PC-3 (cell line): ENCODE measurements at regions of chr1 and their contacts with region 1.

Region 1: DNA sequence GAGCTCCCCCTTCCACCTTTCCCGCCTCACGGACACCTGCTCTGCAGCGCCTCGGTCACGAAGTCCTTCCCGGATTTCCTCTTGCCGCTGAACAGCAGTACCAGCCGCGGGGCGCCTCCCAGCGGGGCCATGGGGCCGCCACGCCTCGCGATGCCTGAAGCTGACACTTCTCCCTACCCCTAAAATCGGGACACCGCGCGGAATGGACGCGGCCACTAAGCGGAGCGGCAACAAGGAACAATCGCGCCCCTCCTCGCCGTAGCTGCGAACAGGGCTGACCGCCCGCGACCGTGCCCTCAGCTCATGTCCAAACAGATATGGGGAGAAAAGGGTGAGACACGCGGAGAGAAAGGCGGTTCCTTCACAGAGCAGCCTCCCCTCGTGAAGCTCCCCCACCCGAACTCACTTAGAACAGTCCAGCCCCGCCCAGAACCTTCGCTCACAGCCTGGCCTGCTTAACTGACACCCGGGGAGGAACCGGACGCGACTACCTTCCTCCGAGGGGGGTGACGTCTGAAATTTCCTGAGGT is at the start of gene PMVK:
- DNase-seq: peak; percentile 94
- ATAC-seq: peak; percentile 72
- H3K4me3 ChIP-seq: peak within 1 kb of the TSS; percentile 67
- H3K27ac ChIP-seq: peak within 1 kb of the TSS; percentile 93
- H3K4me1 ChIP-seq: peaks cover 45% of the 10 kb centered on the region
- H3K27me3 ChIP-seq: no peaks in the 10 kb centered on the region
- CTCF ChIP-seq: peak; percentile 53
- total RNA-seq, gene PMVK: 32.3 and 41.5 TPM in 2 replicates

Region 2: GRCh38 chr1:154607609-154608396 is 328.8 kb before region 1 on chr1 and contains the start of gene ADAR:
- CTCF ChIA-PET with region 1: no interaction called
- POLR2A ChIA-PET with region 1: no interaction called
- intact Hi-C with region 1: loop called (anchors 5 kb)
- DNase-seq: peak; percentile 95
- ATAC-seq: peak; percentile 68
- H3K4me3 ChIP-seq: peak within 1 kb of the TSS; percentile 97
- H3K27ac ChIP-seq: peak within 1 kb of the TSS; percentile 85
- H3K4me1 ChIP-seq: peaks cover 17% of the 10 kb centered on the region
- H3K27me3 ChIP-seq: no peaks in the 10 kb centered on the region
- CTCF ChIP-seq: 0 out of 2 replicates have a peak, but pooled peaks have one; percentile 13
- total RNA-seq, gene ADAR: 129 and 136 TPM in 2 replicates

Region 3: DNA sequence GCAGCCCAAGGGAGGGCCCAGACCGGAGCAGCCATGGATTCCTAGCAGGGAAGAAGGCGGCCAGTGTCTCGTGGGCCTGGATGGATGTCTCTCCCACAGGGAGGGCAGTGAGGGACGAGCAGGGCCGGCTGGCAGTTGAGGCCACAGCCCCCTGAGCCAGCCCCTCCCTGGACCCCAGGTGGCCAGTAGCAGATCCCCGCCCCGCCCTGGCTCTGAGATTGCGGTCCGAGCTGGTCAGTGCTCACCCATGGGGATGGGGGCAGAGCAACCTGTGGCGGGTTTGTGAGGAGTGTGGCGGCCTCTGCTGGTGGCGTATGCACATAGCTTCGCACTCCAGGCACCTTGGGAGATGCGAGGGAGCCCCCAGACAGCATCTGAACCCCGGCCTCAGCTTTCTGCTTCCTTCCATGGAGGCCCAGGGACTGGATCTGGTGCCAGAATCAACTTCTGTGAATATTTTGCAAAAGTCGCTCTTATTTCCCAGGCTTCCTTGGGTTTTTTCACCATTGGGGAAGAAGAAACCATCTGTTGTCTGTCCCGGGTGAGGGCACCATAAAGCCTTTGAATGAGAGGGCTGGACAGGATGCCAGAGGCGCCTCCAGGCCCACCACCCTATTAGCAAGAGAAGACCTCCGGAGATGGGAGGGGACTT is 58.1 kb before region 1 on chr1:
- CTCF ChIA-PET with region 1: no interaction called
- POLR2A ChIA-PET with region 1: no interaction called
- intact Hi-C with region 1: loop called (anchors 5 kb)
- DNase-seq: peak; percentile 80
- ATAC-seq: peak; percentile 93
- H3K4me3 ChIP-seq: no peak overlapping the region
- H3K27ac ChIP-seq: no peak overlapping the region
- H3K4me1 ChIP-seq: peaks cover 9% of the 10 kb centered on the region
- H3K27me3 ChIP-seq: no peaks in the 10 kb centered on the region
- CTCF ChIP-seq: peak; percentile 97

Region 4: GRCh38 chr1:154906621-154907081 is 30.0 kb before region 1 on chr1:
- CTCF ChIA-PET with region 1: interaction called, 5 read pairs
- POLR2A ChIA-PET with region 1: interaction called, 3 read pairs
- intact Hi-C with region 1: loop called (anchors 2 kb)
- DNase-seq: peak; percentile 58
- ATAC-seq: peak; percentile 70
- H3K4me3 ChIP-seq: no peak overlapping the region
- H3K27ac ChIP-seq: no peak overlapping the region
- H3K4me1 ChIP-seq: no peaks in the 10 kb centered on the region
- H3K27me3 ChIP-seq: no peaks in the 10 kb centered on the region
- CTCF ChIP-seq: peak; percentile 74

Region 5: GRCh38 chr1:155063550-155064110 is 127.0 kb after region 1 on chr1 and contains the start of gene EFNA4:
- CTCF ChIA-PET with region 1: interaction called, 11 read pairs
- POLR2A ChIA-PET with region 1: no interaction called
- intact Hi-C with region 1: no loop called
- DNase-seq: peak; percentile 90
- ATAC-seq: peak; percentile 76
- H3K4me3 ChIP-seq: peak within 1 kb of the TSS; percentile 76
- H3K27ac ChIP-seq: 0 out of 2 replicates have a peak within 1 kb of the TSS, but pooled peaks have one; percentile 3
- H3K4me1 ChIP-seq: peaks cover 21% of the 10 kb centered on the region
- H3K27me3 ChIP-seq: no peaks in the 10 kb centered on the region
- CTCF ChIP-seq: no peak
- total RNA-seq, gene EFNA4: 36.7 and 37.4 TPM in 2 replicates